ENCODE measurements at regions of chr10 and their contacts with region 1.

Region 1: DNA sequence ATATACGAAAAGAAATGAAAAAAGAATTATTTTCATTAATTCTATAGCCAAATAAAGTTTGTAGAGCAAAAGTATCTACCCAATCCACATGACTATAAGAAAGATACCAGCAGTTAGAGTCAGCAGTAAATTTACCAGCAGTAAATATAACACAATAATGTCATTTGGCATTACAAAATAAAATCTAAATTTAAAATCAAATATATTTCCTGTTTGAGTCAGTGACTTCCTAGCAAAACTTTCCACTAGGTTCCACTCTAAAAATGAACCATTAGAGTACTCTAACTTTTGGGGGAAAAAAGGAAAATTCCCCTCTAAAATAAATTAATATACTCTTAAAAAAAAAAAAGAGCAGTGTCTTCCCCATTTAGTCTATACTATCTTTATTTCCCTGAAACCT is 144.8 kb downstream of the CPEB3 start:
- DNase-seq: no peak
- H3K4me3 ChIP-seq: no peak overlapping the region
- H3K4me3 Mint-ChIP-seq: no peak overlapping the region
- H3K27ac ChIP-seq: peak overlapping the region in 1 of 2 donors; percentile 45
- H3K27ac Mint-ChIP-seq: no peak overlapping the region
- H3K4me1 ChIP-seq: peaks cover 21 to 38% of the 10 kb centered on the region in 2 donors
- H3K4me1 Mint-ChIP-seq: peaks cover 41% of the 10 kb centered on the region
- H3K27me3 ChIP-seq: no peaks in the 10 kb centered on the region
- H3K27me3 Mint-ChIP-seq: no peaks in the 10 kb centered on the region
- CTCF ChIP-seq: no peak

Region 2: DNA sequence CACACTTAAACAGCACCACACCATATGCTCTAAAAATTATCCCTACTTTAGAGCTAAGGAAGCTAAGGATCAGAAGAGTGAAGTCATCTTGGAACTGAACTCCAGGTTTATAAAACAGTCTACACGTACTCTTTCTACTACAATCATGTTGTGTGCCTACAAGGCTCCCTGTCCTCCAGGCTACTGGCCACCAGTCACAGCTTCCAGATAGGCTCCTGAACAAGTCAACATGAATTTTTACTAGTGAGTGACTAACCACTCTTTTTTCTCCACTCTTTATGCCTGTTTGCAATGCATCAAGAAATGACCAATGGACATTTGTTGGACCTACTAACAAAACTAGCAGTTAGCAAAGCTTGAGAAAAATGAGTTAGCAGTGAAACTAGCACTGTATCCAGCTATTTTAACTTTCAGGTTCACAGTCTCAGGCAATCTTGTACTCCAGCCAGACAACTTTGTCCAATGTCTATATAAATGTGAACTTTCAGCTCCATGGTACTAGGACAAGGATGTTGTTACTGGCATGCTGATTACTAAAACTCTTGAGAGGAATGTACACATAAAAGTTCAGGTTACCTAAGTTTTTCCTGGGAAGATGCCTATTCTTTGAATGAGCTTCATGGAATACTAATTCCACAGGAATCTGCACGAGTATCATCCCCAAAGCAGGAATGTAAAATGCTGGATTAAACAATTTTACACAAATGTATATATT is 42.6 kb before region 1 on chr10:
- intact Hi-C with region 1: loop called in 1 of 2 experiments (anchors 5 kb)
- DNase-seq: no peak
- H3K4me3 ChIP-seq: no peak overlapping the region
- H3K4me3 Mint-ChIP-seq: no peak overlapping the region
- H3K27ac ChIP-seq: no peak overlapping the region
- H3K27ac Mint-ChIP-seq: no peak overlapping the region
- H3K4me1 ChIP-seq: peaks cover 13 to 17% of the 10 kb centered on the region in 2 donors
- H3K4me1 Mint-ChIP-seq: peaks cover 16% of the 10 kb centered on the region
- H3K27me3 ChIP-seq: no peaks in the 10 kb centered on the region
- H3K27me3 Mint-ChIP-seq: peaks cover 0 to 1% (median 0%) of the 10 kb centered on the region in 3 donors
- CTCF ChIP-seq: no peak

Region 3: DNA sequence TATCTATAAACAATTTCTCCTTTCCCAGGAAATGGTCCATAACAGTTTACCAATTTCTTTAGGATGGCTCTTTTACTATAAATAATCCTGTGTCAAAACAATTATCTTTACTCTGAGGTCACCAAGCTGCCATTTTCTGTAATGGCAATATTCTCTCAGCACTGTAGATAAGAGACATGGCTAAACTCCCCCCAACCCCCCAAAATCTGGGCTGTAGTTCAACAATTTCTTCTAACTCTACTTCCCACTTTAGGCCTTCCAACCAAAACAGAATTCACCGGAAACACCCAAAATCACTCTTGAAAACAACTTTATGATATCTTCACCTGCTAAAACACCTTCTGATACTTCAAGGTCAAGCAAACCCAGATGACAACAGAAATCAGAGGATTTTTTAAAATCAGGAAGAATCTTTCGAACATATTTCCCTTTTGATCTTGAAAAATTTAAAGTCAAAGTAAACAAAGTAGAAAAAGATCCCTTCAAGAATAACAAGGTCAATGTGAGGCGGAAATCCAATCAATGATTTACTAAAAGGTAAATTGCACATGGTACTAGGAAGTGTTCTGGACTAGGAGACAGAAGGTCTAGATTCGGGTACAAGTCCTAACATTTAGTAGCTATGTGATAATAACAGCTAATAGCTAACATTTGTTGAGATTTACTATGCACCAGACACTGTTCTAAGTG is 32.1 kb before region 1 on chr10:
- intact Hi-C with region 1: no loop called
- DNase-seq: no peak
- H3K4me3 ChIP-seq: no peak overlapping the region
- H3K4me3 Mint-ChIP-seq: no peak overlapping the region
- H3K27ac ChIP-seq: no peak overlapping the region
- H3K27ac Mint-ChIP-seq: no peak overlapping the region
- H3K4me1 ChIP-seq: no peaks in the 10 kb centered on the region
- H3K4me1 Mint-ChIP-seq: peaks cover 20% of the 10 kb centered on the region
- H3K27me3 ChIP-seq: no peaks in the 10 kb centered on the region
- H3K27me3 Mint-ChIP-seq: peaks cover 0 to 3% (median 0%) of the 10 kb centered on the region in 3 donors
- CTCF ChIP-seq: no peak

Region 4: GRCh38 chr10:92914478-92915325 is 768.6 kb after region 1 on chr10:
- intact Hi-C with region 1: no loop called
- DNase-seq: peak; percentile 3 to 13 (median 13)
- H3K4me3 ChIP-seq: no peak overlapping the region
- H3K4me3 Mint-ChIP-seq: no peak overlapping the region
- H3K27ac ChIP-seq: no peak overlapping the region
- H3K27ac Mint-ChIP-seq: no peak overlapping the region
- H3K4me1 ChIP-seq: no peaks in the 10 kb centered on the region
- H3K4me1 Mint-ChIP-seq: peaks cover 7% of the 10 kb centered on the region
- H3K27me3 ChIP-seq: no peaks in the 10 kb centered on the region
- H3K27me3 Mint-ChIP-seq: peaks cover 0 to 1% (median 0%) of the 10 kb centered on the region in 3 donors
- CTCF ChIP-seq: peak; percentile 84